ENCODE measurements at regions of chr16 and their contacts with region 1.

Region 1: GRCh38 chr16:77009453-77009852 is 181.5 kb upstream of the MON1B start:
- DNase-seq: no peak
- ATAC-seq: no peak
- H3K4me3 ChIP-seq: no peak overlapping the region
- H3K27ac ChIP-seq: no peak overlapping the region
- H3K4me1 ChIP-seq: no peaks in the 10 kb centered on the region
- H3K27me3 ChIP-seq: no peaks in the 10 kb centered on the region
- CTCF ChIP-seq: no peak

Region 2: GRCh38 chr16:77062878-77063671 is 53.6 kb after region 1 on chr16:
- intact Hi-C with region 1: loop called in 1 of 10 experiments (anchors 10 kb)
- DNase-seq: no peak
- ATAC-seq: peak in 7 of 8 donors; percentile 21 to 72 (median 52)
- H3K4me3 ChIP-seq: no peak overlapping the region
- H3K27ac ChIP-seq: peak overlapping the region in 3 of 10 donors; percentile 2 to 23 (median 19)
- H3K4me1 ChIP-seq: peaks cover 0 to 52% (median 20%) of the 10 kb centered on the region in 9 donors
- H3K27me3 ChIP-seq: no peaks in the 10 kb centered on the region
- CTCF ChIP-seq: peak in 2 of 9 donors; percentile 13 to 31